Activated B cell treated with CpG ODN at 0.5 μM for 24 hours (primary cell): ENCODE measurements at regions of chr9 and their contacts with region 1.

Region 1: DNA sequence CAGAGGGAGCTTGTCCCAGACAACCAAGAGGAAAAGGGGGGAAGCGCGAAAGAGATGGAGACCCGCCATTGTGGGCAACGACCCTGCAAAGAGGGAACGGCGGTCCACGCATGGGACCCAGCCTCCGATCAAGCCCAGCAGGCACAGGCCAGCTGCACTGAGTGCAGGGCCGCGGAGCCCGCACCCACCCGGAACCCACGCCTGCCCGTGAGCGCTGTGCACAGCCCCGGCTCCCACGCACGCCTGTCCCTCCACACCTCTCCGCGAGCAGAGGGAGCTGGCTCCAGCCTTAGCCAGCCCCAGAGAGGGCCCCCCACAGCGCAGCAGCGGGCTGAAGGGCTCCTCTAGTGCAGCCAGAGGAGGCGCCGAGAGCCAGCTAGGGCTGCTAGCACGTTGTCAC is 416.5 kb downstream of the DMRTA1 start:
- DNase-seq: no peak
- ATAC-seq: no peak
- H3K4me3 Mint-ChIP-seq: no peak overlapping the region
- H3K27ac Mint-ChIP-seq: no peak overlapping the region
- H3K4me1 Mint-ChIP-seq: no peaks in the 10 kb centered on the region
- H3K27me3 Mint-ChIP-seq: no peaks in the 10 kb centered on the region
- CTCF ChIP-seq: no peak

Region 2: GRCh38 chr9:22808876-22809275 is 54.2 kb before region 1 on chr9:
- CTCF ChIA-PET with region 1: no interaction called
- POLR2A ChIA-PET with region 1: no interaction called
- intact Hi-C with region 1: loop called (anchors 10 kb)
- DNase-seq: no peak
- ATAC-seq: no peak
- H3K4me3 Mint-ChIP-seq: no peak overlapping the region
- H3K27ac Mint-ChIP-seq: no peak overlapping the region
- H3K4me1 Mint-ChIP-seq: no peaks in the 10 kb centered on the region
- H3K27me3 Mint-ChIP-seq: no peaks in the 10 kb centered on the region
- CTCF ChIP-seq: no peak

Region 3: DNA sequence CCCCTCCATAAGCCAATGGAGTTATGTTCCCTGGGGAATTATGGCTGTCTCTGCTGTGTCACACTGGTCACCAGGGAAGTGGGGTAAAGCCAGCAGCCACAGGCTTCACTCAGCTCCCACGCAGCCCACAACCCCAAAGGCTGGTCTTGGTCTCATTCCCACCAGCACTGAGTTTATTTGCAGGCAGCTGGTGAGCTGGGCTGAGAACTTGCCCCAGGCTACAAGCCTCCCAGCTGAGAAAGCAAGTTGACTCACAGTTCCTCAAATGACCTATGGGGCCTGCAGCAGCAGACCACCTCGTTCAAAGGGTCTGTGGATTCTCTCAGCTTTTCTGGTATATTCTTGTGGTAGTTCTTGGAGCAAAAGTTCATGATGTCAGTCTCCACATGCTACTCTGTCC is 494.5 kb after region 1 on chr9:
- CTCF ChIA-PET with region 1: no interaction called
- POLR2A ChIA-PET with region 1: no interaction called
- intact Hi-C with region 1: no loop called
- DNase-seq: no peak
- ATAC-seq: no peak
- H3K4me3 Mint-ChIP-seq: no peak overlapping the region
- H3K27ac Mint-ChIP-seq: no peak overlapping the region
- H3K4me1 Mint-ChIP-seq: no peaks in the 10 kb centered on the region
- H3K27me3 Mint-ChIP-seq: no peaks in the 10 kb centered on the region
- CTCF ChIP-seq: no peak